OCI-LY7 (cell line): ENCODE measurements at regions of chr6 and their contacts with region 1.

Region 1: GRCh38 chr6:8435160-8435852 is at the start of gene SLC35B3:
- DNase-seq: peak; percentile 97
- H3K4me3 ChIP-seq: peak within 1 kb of the TSS; percentile 88
- H3K27ac ChIP-seq: peak within 1 kb of the TSS; percentile 52
- H3K4me1 ChIP-seq: peaks cover 20% of the 10 kb centered on the region
- CTCF ChIP-seq: no peak
- total RNA-seq, gene SLC35B3: 10.3 and 11.7 TPM in 2 replicates

Region 2: GRCh38 chr6:8102122-8102958 is 333.0 kb before region 1 on chr6 and contains the start of gene EEF1E1:
- CTCF ChIA-PET with region 1: no interaction called
- POLR2A ChIA-PET with region 1: no interaction called
- intact Hi-C with region 1: loop called (anchors 10 kb)
- DNase-seq: peak; percentile 97
- H3K4me3 ChIP-seq: peak within 1 kb of the TSS; percentile 81
- H3K27ac ChIP-seq: peak within 1 kb of the TSS; percentile 47
- H3K4me1 ChIP-seq: peaks cover 19% of the 10 kb centered on the region
- CTCF ChIP-seq: no peak
- total RNA-seq, gene EEF1E1: 54.6 and 70.9 TPM in 2 replicates

Region 3: GRCh38 chr6:8195040-8195713 is 240.1 kb before region 1 on chr6:
- CTCF ChIA-PET with region 1: no interaction called
- POLR2A ChIA-PET with region 1: no interaction called
- intact Hi-C with region 1: no loop called
- DNase-seq: no peak
- H3K4me3 ChIP-seq: no peak overlapping the region
- H3K27ac ChIP-seq: no peak overlapping the region
- H3K4me1 ChIP-seq: no peaks in the 10 kb centered on the region
- CTCF ChIP-seq: peak; percentile 48